ENCODE measurements at regions of chr7 and their contacts with region 1.

Region 1: GRCh38 chr7:17301471-17302456 is 3.3 kb downstream of the AHR start:
- DNase-seq: no peak
- H3K4me3 ChIP-seq: peak overlapping the region; percentile 35; the same call in 1 of the 2 replicates
- H3K27ac ChIP-seq: no peak overlapping the region
- H3K27me3 ChIP-seq: no peaks in the 10 kb centered on the region
- CTCF ChIP-seq: peak; percentile 63

Region 2: GRCh38 chr7:17318146-17318545 is 16.4 kb after region 1 on chr7:
- CTCF ChIA-PET with region 1: interaction called, 13 read pairs
- POLR2A ChIA-PET with region 1: no interaction called
- DNase-seq: no peak
- H3K4me3 ChIP-seq: no peak overlapping the region
- H3K27ac ChIP-seq: no peak overlapping the region
- H3K27me3 ChIP-seq: no peaks in the 10 kb centered on the region
- CTCF ChIP-seq: no peak

Region 3: DNA sequence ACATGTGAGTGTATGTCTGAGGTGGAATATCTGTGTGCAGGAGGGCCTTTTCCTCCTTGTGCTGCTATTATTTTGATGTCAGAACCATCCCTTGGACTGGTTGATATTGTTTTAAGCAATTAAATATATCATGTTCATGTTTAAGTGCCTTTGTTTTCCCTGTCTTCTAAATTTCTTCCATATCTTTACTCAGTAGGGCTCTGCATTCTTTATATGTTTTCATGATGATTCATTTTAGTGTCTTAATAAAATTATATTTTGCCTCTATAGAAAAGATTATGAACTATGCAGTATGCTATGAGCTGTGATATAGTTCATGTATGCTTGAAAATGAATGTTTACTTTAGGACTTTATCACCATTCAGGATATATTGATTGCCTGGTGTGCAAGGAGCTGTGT is 31.4 kb after region 1 on chr7:
- CTCF ChIA-PET with region 1: no interaction called
- POLR2A ChIA-PET with region 1: no interaction called
- DNase-seq: no peak
- H3K4me3 ChIP-seq: no peak overlapping the region
- H3K27ac ChIP-seq: no peak overlapping the region
- H3K27me3 ChIP-seq: no peaks in the 10 kb centered on the region
- CTCF ChIP-seq: no peak

Region 4: DNA sequence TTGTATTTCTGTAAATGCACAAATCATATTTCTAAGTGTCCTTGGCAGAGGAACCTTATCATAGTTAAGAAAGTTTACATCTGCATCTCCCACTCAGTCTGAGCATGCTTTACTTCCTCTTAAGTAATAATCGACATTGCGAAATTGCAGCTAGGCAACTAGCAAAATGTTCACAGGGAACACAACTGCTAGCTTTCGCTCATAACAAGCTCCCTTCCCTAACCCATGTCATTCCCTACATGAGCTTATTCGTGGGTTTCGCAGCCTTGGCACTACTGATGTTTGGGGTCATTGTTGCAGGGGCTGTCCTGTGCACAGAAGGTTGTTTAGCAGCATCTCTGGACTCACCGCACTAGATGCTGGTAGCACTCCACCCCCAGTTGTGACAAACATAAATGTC is 68.3 kb after region 1 on chr7:
- CTCF ChIA-PET with region 1: interaction called, 10 read pairs
- POLR2A ChIA-PET with region 1: no interaction called
- DNase-seq: peak; percentile 83
- H3K4me3 ChIP-seq: no peak overlapping the region
- H3K27ac ChIP-seq: peak overlapping the region; percentile 89
- H3K27me3 ChIP-seq: no peaks in the 10 kb centered on the region
- CTCF ChIP-seq: no peak

Measured in AG04450 (cell line).